PC-9 (cell line): ENCODE measurements at regions of chr5 and their contacts with region 1.

Region 1: DNA sequence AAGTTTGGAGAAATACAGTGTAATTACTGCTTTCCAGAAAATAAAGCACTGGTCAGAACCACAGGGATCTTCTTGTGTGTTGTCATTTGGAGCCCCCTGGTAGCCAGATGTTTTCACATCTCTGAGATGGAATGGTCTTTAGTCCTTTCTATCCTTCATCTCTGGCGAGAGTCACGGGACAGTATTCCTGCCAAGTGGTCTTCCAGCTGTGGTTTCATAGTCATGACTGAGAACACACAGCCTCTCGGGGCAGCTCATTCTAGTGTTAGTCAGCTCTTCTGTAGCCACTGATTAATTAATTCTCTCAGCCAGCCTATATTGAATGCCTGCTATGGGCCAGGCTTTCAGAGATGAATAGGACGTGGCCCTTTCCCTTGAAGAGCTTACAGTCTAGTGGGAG is 34.1 kb downstream of the HMGXB3 start:
- DNase-seq: no peak
- H3K4me3 ChIP-seq: no peak overlapping the region
- H3K27ac ChIP-seq: no peak overlapping the region
- H3K4me1 ChIP-seq: no peaks in the 10 kb centered on the region
- H3K27me3 ChIP-seq: no peaks in the 10 kb centered on the region
- CTCF ChIP-seq: no peak

Region 2: DNA sequence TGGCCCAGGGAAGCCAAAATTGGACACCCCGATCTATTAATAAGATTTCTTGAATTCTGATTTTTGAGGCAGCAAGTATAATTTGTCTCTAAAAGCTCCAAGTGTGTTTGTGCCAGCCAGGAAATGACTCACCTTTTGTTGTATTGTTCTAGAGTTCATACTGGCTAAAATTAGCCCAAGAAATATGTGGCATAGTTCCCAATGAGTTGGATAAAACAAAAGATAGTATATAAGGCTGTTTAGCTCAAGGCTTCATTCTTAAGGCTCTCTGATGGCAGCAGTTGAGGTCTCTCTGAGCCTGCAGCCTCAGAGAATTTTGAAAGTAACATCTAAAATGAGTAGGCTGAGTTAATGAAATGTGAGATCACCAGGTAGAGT is 12.5 kb before region 1 on chr5:
- CTCF ChIA-PET with region 1: no interaction called
- POLR2A ChIA-PET with region 1: interaction called, 10 read pairs
- intact Hi-C with region 1: no loop called
- DNase-seq: peak; percentile 53 to 91
- H3K4me3 ChIP-seq: peak overlapping the region; percentile 33; the same call in 1 of the 2 replicates
- H3K27ac ChIP-seq: peak overlapping the region; percentile 93
- H3K4me1 ChIP-seq: peaks cover 59% of the 10 kb centered on the region
- H3K27me3 ChIP-seq: no peaks in the 10 kb centered on the region
- CTCF ChIP-seq: no peak